ENCODE measurements at regions of chr18 and their contacts with region 1.

Region 1: GRCh38 chr18:457140-457519 is 43.4 kb downstream of the COLEC12 start:
- DNase-seq: peak in 1 of 4 donors; percentile 31
- ATAC-seq: no peak
- H3K4me3 ChIP-seq: no peak overlapping the region
- H3K27ac ChIP-seq: no peak overlapping the region
- H3K4me1 ChIP-seq: no peaks in the 10 kb centered on the region
- H3K27me3 ChIP-seq: no peaks in the 10 kb centered on the region
- CTCF ChIP-seq: no peak
- POLR2A ChIP-seq: no peak

Region 2: DNA sequence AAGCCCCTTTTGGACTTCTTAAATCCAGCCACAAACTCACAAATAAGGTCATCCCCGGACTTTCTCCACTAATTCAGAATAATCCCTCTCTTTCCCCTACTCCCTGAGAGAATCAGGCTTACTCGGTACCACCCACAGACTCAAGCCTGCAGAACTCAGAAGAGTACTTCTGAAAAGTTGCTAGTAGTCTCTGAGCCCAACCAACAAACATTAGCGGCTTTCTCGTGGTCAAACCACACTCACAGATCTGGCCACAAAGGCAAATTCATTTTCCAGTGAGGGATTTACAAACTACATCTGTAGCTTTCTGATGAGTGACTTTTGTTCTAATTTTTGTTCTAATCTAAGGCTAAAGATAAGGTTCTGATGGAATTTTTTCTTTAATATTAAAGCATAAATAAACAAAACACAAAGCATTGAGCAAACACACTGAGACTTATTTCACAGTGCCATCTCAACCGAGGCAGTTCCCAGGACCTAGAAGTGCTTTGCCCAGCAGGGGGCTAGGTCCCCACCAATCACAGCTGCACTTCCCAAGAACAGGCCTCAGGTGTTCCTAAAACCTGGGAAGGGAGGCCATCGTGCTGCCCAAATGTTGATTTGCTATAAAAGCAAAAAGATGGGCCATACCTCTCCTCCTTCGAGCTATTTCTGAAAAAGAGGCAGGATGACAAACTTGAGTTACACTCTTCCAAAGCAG is 67.3 kb before region 1 on chr18:
- intact Hi-C with region 1: loop called (anchors 10 kb)
- DNase-seq: no peak
- ATAC-seq: no peak
- H3K4me3 ChIP-seq: no peak overlapping the region
- H3K27ac ChIP-seq: no peak overlapping the region
- H3K4me1 ChIP-seq: peaks cover 16% of the 10 kb centered on the region
- H3K27me3 ChIP-seq: no peaks in the 10 kb centered on the region
- CTCF ChIP-seq: peak in 2 of 7 experiments; percentile 4 to 17
- POLR2A ChIP-seq: no peak

Measured in body of pancreas (tissue), 4 donors.